Activated naive CD4-positive, alpha-beta T cell treated with anti-CD3 and anti-CD28 coated beads, Interleukin-2, amount 10 ng/mL, durations not matched to agents 7 days and 5 days (primary cell): ENCODE measurements at regions of chr4 and their contacts with region 1.

Region 1: GRCh38 chr4:56424697-56425514 is 10.5 kb downstream of the PPAT start:
- DNase-seq: peak; percentile 59
- H3K4me3 Mint-ChIP-seq: no peak overlapping the region
- H3K27ac Mint-ChIP-seq: no peak overlapping the region
- H3K4me1 Mint-ChIP-seq: peaks cover 14% of the 10 kb centered on the region
- H3K27me3 Mint-ChIP-seq: no peaks in the 10 kb centered on the region

Region 2: DNA sequence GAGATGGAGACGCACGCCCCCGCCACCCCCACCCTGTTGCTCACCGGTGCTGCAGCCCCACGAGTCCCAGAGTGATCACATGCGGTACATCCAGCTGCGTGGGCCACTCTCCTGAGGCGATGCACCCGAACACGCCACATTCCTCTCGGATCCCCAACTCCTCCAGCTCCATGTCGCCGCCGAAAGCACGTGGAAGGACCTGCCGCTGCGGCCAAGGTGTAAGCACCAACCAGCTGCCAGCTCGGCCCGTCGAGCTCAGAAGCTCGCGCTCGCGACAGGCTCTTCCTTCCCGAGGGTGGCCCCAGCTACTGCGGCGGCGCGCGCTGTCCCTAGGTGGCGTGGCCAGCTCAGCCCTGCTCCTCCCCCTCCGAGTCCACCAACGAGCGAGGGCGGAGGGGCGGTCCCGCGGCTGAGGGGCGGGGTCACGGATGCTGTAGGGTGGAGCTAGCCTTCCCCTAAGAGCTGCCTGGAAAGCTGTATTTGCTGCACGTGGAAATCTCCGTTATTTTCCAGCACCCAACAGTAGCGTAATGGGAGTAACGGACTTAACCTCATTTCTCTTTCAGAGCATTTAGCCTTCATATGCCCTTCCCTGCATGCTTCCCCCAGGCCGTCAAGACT is 10.5 kb after region 1 on chr4 and contains the start of gene PPAT:
- CTCF ChIA-PET with region 1: interaction called, 18 read pairs
- DNase-seq: peak; percentile 99
- H3K4me3 Mint-ChIP-seq: peak within 1 kb of the TSS; percentile 84
- H3K27ac Mint-ChIP-seq: peak within 1 kb of the TSS; percentile 92
- H3K4me1 Mint-ChIP-seq: peaks cover 51% of the 10 kb centered on the region
- H3K27me3 Mint-ChIP-seq: no peaks in the 10 kb centered on the region

Region 3: DNA sequence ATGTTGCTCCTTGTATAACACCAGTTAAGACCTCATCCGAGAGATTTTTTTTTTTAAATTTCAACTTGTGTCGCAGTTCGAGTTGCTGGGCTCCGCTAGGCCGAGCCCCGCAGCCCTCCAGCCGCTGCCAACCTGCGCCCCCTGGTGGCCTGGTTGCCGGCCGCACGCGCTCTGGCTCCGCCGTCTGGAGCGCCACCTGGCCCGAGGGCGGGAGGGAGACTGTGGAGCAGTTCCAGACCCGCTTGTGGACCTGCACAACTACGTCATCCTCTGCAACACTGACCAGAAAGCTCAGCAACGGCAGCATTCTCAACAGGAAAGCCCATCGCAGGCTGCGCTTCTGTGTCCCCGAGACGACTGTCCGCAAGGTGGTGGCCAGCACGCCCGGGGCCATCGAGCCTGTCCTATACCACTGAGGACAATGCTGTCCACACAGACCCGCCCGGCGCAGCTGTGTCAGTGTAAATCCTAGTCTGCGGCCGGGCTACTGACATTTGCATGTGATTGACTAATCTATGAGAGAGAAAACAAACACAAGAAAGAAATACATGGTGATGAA is 119.7 kb after region 1 on chr4:
- CTCF ChIA-PET with region 1: interaction called, 12 read pairs
- DNase-seq: peak; percentile 85
- H3K4me3 Mint-ChIP-seq: peak overlapping the region; percentile 32
- H3K27ac Mint-ChIP-seq: no peak overlapping the region
- H3K4me1 Mint-ChIP-seq: peaks cover 28% of the 10 kb centered on the region
- H3K27me3 Mint-ChIP-seq: peaks cover 24% of the 10 kb centered on the region

Region 4: GRCh38 chr4:56840559-56840958 is 415.7 kb after region 1 on chr4:
- CTCF ChIA-PET with region 1: interaction called, 21 read pairs
- DNase-seq: no peak
- H3K4me3 Mint-ChIP-seq: no peak overlapping the region
- H3K27ac Mint-ChIP-seq: no peak overlapping the region
- H3K4me1 Mint-ChIP-seq: peaks cover 5% of the 10 kb centered on the region
- H3K27me3 Mint-ChIP-seq: no peaks in the 10 kb centered on the region